ENCODE measurements at regions of chr13 and their contacts with region 1.

Region 1: GRCh38 chr13:112641456-112642089 is 48.3 kb upstream of the ATP11A start:
- DNase-seq: no peak
- ATAC-seq: no peak
- H3K4me3 Mint-ChIP-seq: no peak overlapping the region
- H3K27ac Mint-ChIP-seq: no peak overlapping the region
- H3K4me1 Mint-ChIP-seq: peaks cover 8% of the 10 kb centered on the region
- H3K27me3 Mint-ChIP-seq: peaks cover 19% of the 10 kb centered on the region

Region 2: GRCh38 chr13:112689303-112690165 is 48.0 kb after region 1 on chr13 and contains the start of gene ATP11A:
- CTCF ChIA-PET with region 1: interaction called, 15 read pairs
- POLR2A ChIA-PET with region 1: interaction called, 3 read pairs
- DNase-seq: peak; percentile 83
- ATAC-seq: peak; percentile 88
- H3K4me3 Mint-ChIP-seq: peak within 1 kb of the TSS; percentile 86
- H3K27ac Mint-ChIP-seq: peak within 1 kb of the TSS; percentile 76
- H3K4me1 Mint-ChIP-seq: peaks cover 47% of the 10 kb centered on the region
- H3K27me3 Mint-ChIP-seq: no peaks in the 10 kb centered on the region
- total RNA-seq, gene ATP11A: 35.6 to 38.3 TPM